ENCODE measurements at regions of chr7 and their contacts with region 1.

Region 1: GRCh38 chr7:140653319-140654108 is 12.9 kb upstream of the DENND2A start:
- DNase-seq: peak in 1 of 2 donors; percentile 42
- ATAC-seq: peak; percentile 70 to 85 (median 76)
- H3K4me3 ChIP-seq: no peak overlapping the region
- H3K27ac ChIP-seq: no peak overlapping the region
- H3K4me1 ChIP-seq: peaks cover 32% of the 10 kb centered on the region
- H3K27me3 ChIP-seq: no peaks in the 10 kb centered on the region
- CTCF ChIP-seq: peak; percentile 88

Region 2: DNA sequence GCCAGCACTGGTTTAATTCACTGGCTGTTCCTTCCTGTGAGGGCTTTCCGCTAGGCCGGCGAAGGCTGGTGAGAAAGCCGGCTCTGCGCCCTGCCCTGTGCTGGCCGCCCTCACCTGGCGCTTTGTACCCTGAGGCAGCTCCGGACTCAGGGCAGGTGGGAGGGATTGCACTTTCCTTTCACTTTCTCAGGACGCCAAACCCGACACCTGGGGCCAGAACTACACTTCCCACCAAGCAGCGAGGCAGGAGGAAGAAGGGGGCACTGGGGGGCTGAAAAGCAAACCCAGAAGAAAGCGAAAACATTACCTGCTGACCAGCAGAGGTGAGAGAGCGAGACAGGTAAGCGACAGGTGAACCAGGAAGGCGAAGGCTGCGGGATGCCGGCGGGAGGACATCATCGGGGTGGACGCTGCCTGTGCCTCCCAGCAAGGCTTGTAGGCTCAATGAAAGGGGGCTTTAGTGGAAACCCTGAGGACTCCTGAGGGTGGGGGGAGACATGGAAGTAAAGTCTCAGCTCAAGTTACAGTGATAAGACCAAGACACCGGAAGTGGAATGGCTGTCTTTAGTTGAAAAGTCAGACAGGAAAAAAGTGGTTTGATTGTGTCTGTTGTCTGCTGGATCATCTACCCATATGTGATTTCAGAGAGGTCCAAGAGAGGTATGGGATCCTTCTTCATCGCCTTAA is 249.5 kb before region 1 on chr7 and contains the start of gene RAB19:
- intact Hi-C with region 1: loop called in 1 of 2 experiments (anchors 10 kb)
- DNase-seq: no peak
- ATAC-seq: no peak
- H3K4me3 ChIP-seq: peak within 1 kb of the TSS; percentile 48
- H3K27ac ChIP-seq: no peak within 1 kb of the TSS
- H3K4me1 ChIP-seq: no peaks in the 10 kb centered on the region
- H3K27me3 ChIP-seq: peaks cover 0 to 19% (median 4%) of the 10 kb centered on the region in 3 donors
- CTCF ChIP-seq: no peak
- total RNA-seq, gene RAB19: not detected

Region 3: DNA sequence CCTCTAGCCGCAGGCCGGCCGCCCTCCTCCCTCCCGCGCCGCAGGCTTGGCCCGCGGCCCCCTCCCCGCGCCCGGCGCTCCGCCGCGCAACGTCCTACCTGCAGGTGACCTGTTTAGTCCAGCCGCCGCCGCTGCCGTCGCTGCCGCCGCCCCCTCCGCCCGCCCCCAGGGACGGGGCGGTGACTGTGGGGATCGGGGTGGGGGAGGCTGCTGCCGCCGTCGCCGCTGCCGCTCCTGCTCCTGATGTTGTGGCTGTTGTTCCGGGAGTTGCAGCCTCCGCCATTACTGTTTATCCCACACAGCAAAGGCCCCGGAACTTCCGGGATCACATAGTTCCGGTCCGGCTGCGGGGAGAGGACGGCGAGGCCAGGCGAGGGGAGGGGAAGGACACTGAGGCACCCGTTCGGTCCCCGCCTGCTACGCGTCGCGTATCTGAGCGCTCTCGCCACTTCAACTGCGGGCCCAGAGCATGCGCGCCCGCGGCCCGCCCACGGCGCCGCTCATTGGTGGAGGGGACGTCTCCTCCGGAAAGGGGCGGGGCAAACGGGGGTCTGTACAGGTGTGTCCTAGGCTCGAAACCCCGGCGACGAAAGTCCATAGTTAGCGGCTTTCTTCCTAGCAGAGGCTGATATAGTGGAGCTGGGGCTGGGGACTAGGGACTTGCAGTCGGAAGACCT is 174.3 kb before region 1 on chr7 and contains the start of gene MKRN1:
- intact Hi-C with region 1: loop called (anchors 2 kb)
- DNase-seq: peak; percentile 94 to 96
- ATAC-seq: peak; percentile 99
- H3K4me3 ChIP-seq: peak within 1 kb of the TSS; percentile 96
- H3K27ac ChIP-seq: peak within 1 kb of the TSS; percentile 82
- H3K4me1 ChIP-seq: peaks cover 14% of the 10 kb centered on the region
- H3K27me3 ChIP-seq: no peaks in the 10 kb centered on the region
- CTCF ChIP-seq: no peak
- total RNA-seq, gene MKRN1: 58.3 to 82.0 (median 69.3) TPM

Region 4: DNA sequence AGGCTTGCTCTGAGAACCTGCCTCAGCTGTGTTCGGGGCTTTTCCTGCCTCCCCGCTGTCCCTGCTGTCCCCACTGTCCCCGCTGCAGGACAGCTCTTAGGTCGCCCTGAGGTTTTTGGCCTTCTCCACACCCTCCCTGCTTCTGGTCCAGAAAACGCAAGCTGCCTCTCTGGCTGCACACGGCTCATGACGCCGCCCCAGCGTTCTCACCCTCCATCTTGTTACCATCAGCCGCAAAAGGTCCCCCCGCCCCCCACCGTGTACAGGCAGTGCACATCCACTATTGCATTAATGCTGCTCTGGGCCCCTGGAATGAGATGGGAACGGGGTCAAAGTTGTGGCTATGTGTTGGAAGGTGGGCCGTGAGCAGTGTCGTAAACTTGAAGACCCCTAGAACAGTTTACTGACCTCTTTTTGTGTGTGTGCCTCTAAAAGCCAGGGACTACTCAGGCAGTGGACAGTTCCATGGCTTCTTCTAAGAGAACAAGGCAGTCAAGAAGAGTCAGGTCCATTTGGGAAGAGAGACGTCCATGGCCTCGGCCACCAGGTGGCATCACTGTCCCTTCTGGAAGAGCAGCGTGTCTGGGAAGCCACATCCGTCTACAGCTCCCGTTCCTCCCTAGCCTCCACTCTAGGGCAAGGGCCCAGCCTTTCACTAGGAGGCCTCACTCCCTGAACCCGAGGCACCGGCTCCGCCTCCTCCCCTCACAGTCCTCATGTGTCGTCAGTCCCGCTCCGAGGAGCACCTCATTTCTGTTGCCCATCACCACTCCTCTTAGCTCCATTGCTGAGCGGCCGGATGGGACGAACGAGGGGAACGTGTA is 135.8 kb before region 1 on chr7:
- intact Hi-C with region 1: loop called (anchors 2 kb)
- DNase-seq: peak; percentile 89 to 93
- ATAC-seq: peak; percentile 94 to 97 (median 96)
- H3K4me3 ChIP-seq: no peak overlapping the region
- H3K27ac ChIP-seq: peak overlapping the region; percentile 36
- H3K4me1 ChIP-seq: no peaks in the 10 kb centered on the region
- H3K27me3 ChIP-seq: no peaks in the 10 kb centered on the region
- CTCF ChIP-seq: peak; percentile 89

Region 5: DNA sequence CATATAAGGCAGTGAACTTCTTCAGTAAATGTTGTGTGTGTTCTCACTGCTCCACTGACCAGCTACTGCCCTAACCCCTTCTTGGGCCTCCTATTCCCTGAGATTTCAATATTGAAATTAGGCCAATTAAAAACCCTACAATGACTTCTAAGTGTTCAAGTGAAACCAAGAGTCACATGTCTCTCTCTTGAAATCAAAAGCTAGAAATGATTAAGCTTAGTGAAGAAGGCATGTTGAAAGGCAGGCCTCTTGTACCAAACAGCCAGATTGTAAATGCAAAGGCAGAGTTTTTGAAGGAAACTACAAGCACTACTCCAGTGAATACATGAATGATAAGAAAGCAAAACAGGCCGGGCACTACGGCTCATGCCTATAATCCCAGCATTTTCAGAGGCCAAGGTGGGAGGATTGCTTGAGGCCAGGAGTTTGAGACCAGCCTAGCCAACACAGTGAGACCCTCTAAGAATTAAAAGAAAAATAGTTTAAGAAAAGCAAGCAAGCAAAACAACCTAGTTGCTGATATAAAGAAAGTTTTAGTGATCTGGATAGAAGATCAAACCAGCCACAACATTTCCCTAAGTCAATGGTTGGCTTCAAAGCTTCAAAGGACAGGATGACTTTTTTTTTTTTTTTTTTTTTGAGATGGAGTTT is 248.9 kb after region 1 on chr7:
- intact Hi-C with region 1: no loop called
- DNase-seq: no peak
- ATAC-seq: no peak
- H3K4me3 ChIP-seq: no peak overlapping the region
- H3K27ac ChIP-seq: no peak overlapping the region
- H3K4me1 ChIP-seq: peaks cover 7% of the 10 kb centered on the region
- H3K27me3 ChIP-seq: no peaks in the 10 kb centered on the region
- CTCF ChIP-seq: no peak

Region 6: GRCh38 chr7:141014524-141015395 is 361.2 kb after region 1 on chr7 and contains the start of gene MRPS33:
- intact Hi-C with region 1: loop called in 1 of 2 experiments (anchors 10 kb)
- DNase-seq: peak; percentile 93 to 96
- ATAC-seq: peak; percentile 99 to 100 (median 100)
- H3K4me3 ChIP-seq: peak within 1 kb of the TSS; percentile 85
- H3K27ac ChIP-seq: peak within 1 kb of the TSS; percentile 87
- H3K4me1 ChIP-seq: peaks cover 11% of the 10 kb centered on the region
- H3K27me3 ChIP-seq: peaks cover 0 to 7% (median 0%) of the 10 kb centered on the region in 3 donors
- CTCF ChIP-seq: peak; percentile 15
- total RNA-seq, gene MRPS33: 70.5 to 105 (median 93.7) TPM

Measured in psoas muscle (tissue), 8 donors.